Naive thymus-derived CD4-positive, alpha-beta T cell (primary cell): ENCODE measurements at regions of chr1 and their contacts with region 1.

Region 1: DNA sequence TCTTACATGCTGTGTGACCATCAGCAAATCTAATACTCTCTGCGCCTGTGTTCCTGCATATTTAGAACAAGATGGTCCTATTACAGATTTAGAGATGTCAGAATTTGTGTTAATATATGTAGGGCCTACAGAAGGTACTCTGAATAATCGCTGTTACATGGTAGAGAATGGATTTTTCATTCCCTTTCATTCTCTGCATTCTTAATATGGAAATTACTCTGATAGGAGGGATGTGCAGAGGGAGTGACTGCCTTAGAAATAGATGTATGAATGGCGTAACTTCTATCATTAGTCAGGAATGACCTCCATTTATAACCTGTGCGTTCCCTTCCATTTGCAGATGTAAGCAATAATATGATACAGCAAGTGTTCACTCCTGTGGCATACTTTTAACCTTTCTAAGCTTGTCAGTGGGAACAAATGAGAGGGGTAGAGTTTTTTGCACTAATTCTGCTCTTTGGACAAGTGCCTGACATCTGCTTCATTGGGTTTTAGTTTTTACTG is 45.6 kb downstream of the MIA3 start:
- DNase-seq: no peak
- ATAC-seq: no peak
- H3K4me3 ChIP-seq: no peak overlapping the region
- H3K4me3 Mint-ChIP-seq: no peak overlapping the region
- H3K27ac ChIP-seq: no peak overlapping the region
- H3K27ac Mint-ChIP-seq: peak overlapping the region in 2 of 9 donors; percentile 17 to 54
- H3K4me1 ChIP-seq: no peaks in the 10 kb centered on the region
- H3K4me1 Mint-ChIP-seq: peaks cover 4 to 19% (median 13%) of the 10 kb centered on the region in 7 donors
- H3K27me3 ChIP-seq: no peaks in the 10 kb centered on the region
- H3K27me3 Mint-ChIP-seq: no peaks in the 10 kb centered on the region

Region 2: GRCh38 chr1:222680080-222680479 is 16.6 kb after region 1 on chr1:
- CTCF ChIA-PET with region 1: no interaction called
- POLR2A ChIA-PET with region 1: no interaction called
- intact Hi-C with region 1: loop called in 1 of 2 experiments (anchors 2 kb)
- DNase-seq: no peak
- ATAC-seq: no peak
- H3K4me3 ChIP-seq: no peak overlapping the region
- H3K4me3 Mint-ChIP-seq: no peak overlapping the region
- H3K27ac ChIP-seq: no peak overlapping the region
- H3K27ac Mint-ChIP-seq: peak overlapping the region in 2 of 9 donors; percentile 10 to 17
- H3K4me1 ChIP-seq: peaks cover 0 to 4% of the 10 kb centered on the region in 2 donors
- H3K4me1 Mint-ChIP-seq: peaks cover 0 to 7% (median 2%) of the 10 kb centered on the region in 7 donors
- H3K27me3 ChIP-seq: no peaks in the 10 kb centered on the region
- H3K27me3 Mint-ChIP-seq: no peaks in the 10 kb centered on the region